ENCODE measurements at regions of chr10 and their contacts with region 1.

Region 1: DNA sequence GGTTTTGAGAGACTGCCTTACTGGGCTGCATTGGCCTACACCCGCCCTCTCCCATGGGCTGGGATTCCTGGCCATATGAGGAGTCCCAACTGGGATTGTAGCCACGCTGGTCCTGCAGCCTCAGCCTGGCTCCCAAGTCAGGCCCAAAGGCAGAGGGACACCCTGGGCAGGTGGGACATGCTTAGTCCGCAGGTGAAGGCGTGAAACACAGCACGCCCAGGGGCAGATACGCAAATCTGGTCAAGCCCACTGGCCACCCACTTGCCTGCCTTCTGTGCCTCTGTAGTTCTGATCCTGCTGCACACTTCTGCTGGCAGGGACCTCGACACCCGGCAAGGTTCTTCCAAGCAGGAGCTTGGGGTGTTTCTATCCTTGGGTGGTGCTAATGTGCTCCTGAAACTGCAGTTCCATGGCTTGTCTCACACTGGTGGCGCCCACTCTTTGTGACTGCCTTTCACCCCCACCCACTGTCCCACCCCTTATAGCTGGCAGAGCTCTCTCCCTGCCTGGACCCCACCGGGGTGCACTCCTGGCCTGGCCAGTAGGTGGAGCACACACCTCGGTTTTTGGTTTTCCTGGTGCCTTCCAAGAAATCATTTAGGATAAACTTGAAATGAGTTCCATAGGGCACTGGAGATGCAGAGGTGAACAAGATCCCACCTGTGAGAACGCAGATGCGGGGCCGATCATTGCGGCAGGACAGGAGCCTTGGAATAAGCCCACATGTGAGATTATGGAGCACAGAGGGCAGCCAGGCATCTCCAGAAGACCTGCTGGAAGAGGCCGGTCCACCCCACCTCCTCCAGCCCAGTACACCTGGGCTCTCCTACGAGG is 47.9 kb downstream of the MKI67 start:
- DNase-seq: peak; percentile 28
- ATAC-seq: peak; percentile 97
- H3K4me3 ChIP-seq: no peak overlapping the region
- H3K27ac ChIP-seq: no peak overlapping the region
- H3K4me1 ChIP-seq: no peaks in the 10 kb centered on the region
- H3K27me3 ChIP-seq: peaks cover 4 to 41% of the 10 kb centered on the region in 2 experiments; a peak in 4 of 5 replicates
- CTCF ChIP-seq: peak; percentile 81
- EP300 ChIP-seq: no peak
- POLR2A ChIP-seq: no peak
- RAD21 ChIP-seq: no peak

Region 2: GRCh38 chr10:128211953-128212727 is 133.8 kb after region 1 on chr10:
- CTCF ChIA-PET with region 1: no interaction called
- POLR2A ChIA-PET with region 1: no interaction called
- in situ Hi-C with region 1: no loop called
- intact Hi-C with region 1: loop called (anchors 5 kb)
- DNase-seq: peak; percentile 48
- ATAC-seq: peak; percentile 89
- H3K4me3 ChIP-seq: peak overlapping the region in 1 of 3 experiments; percentile 39; a peak in 1 of 6 replicates
- H3K27ac ChIP-seq: no peak overlapping the region
- H3K4me1 ChIP-seq: no peaks in the 10 kb centered on the region
- H3K27me3 ChIP-seq: peaks cover 8 to 44% of the 10 kb centered on the region in 2 experiments
- CTCF ChIP-seq: peak; percentile 91
- EP300 ChIP-seq: no peak
- POLR2A ChIP-seq: no peak
- RAD21 ChIP-seq: peak; percentile 69

Region 3: DNA sequence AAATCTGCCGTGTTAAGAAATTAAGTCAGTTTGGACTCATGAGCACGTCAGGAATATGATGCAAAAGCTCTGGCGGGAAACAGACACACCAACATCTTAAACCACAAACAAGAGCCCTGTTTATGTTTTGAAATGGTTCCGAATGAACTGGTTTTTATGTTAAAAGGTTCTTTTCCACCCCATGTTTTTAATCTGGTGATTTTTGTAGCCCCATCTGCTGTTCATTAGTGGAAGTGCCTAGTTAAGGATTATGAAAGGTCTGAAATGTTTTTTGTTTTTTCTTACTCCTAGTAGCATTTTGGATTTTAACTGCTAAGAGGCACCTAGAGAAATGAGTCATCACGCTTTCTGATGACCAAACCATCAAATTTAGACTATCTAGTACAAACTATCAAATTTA is 451.9 kb after region 1 on chr10:
- CTCF ChIA-PET with region 1: no interaction called
- POLR2A ChIA-PET with region 1: no interaction called
- in situ Hi-C with region 1: loop called (anchors 25 kb)
- intact Hi-C with region 1: no loop called
- DNase-seq: no peak
- ATAC-seq: no peak
- H3K4me3 ChIP-seq: no peak overlapping the region
- H3K27ac ChIP-seq: no peak overlapping the region
- H3K4me1 ChIP-seq: no peaks in the 10 kb centered on the region
- H3K27me3 ChIP-seq: peaks cover 1 to 58% of the 10 kb centered on the region in 2 experiments; a peak in 4 of 5 replicates
- CTCF ChIP-seq: peak; percentile 31
- EP300 ChIP-seq: no peak
- POLR2A ChIP-seq: no peak
- RAD21 ChIP-seq: no peak

Measured in HepG2 (cell line).